Activated CD4-positive, alpha-beta T cell treated with anti-CD3 and anti-CD28 coated beads for 36 hours (primary cell): ENCODE measurements at regions of chr17 and their contacts with region 1.

Region 1: DNA sequence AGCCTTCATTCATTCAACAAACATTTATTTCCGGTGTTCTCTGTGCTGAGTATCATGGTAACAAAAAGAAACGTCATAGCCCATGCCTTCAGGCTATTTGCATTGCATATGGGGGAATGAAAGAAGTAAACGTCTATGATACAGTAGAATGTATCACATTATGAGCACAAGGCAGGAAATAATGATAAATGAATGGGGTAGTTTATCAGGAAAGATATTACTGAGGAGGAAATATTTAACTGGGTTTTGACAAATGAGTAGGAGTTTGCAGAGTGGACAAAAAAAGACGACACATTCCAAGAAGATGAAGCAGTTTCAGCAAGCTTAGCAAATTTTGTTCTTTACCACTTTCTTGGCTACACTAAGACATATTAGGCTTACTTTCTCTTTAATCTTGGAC is 1.3 kb upstream of the KRTAP4-7 start:
- DNase-seq: no peak
- ATAC-seq: no peak
- H3K4me3 Mint-ChIP-seq: no peak overlapping the region
- H3K27ac Mint-ChIP-seq: no peak overlapping the region
- H3K4me1 Mint-ChIP-seq: no peaks in the 10 kb centered on the region
- H3K27me3 Mint-ChIP-seq: peaks cover 7% of the 10 kb centered on the region

Region 2: GRCh38 chr17:40480501-40481003 is 602.1 kb before region 1 on chr17:
- CTCF ChIA-PET with region 1: no interaction called
- POLR2A ChIA-PET with region 1: no interaction called
- intact Hi-C with region 1: no loop called
- DNase-seq: peak; percentile 95
- ATAC-seq: peak; percentile 94
- H3K4me3 Mint-ChIP-seq: peak overlapping the region; percentile 60
- H3K27ac Mint-ChIP-seq: peak overlapping the region; percentile 96
- H3K4me1 Mint-ChIP-seq: peaks cover 70% of the 10 kb centered on the region
- H3K27me3 Mint-ChIP-seq: no peaks in the 10 kb centered on the region

Region 3: GRCh38 chr17:41107941-41108450 is 25.4 kb after region 1 on chr17:
- CTCF ChIA-PET with region 1: no interaction called
- POLR2A ChIA-PET with region 1: no interaction called
- intact Hi-C with region 1: loop called in 1 of 2 experiments (anchors 1 kb)
- DNase-seq: no peak
- ATAC-seq: no peak
- H3K4me3 Mint-ChIP-seq: no peak overlapping the region
- H3K27ac Mint-ChIP-seq: no peak overlapping the region
- H3K4me1 Mint-ChIP-seq: peaks cover 6% of the 10 kb centered on the region
- H3K27me3 Mint-ChIP-seq: peaks cover 6% of the 10 kb centered on the region

Region 4: GRCh38 chr17:41140360-41141132 is 57.9 kb after region 1 on chr17 and contains the start of gene KRTAP4-6:
- CTCF ChIA-PET with region 1: no interaction called
- POLR2A ChIA-PET with region 1: no interaction called
- intact Hi-C with region 1: loop called in 1 of 2 experiments (anchors 2 kb)
- DNase-seq: no peak
- ATAC-seq: no peak
- H3K4me3 Mint-ChIP-seq: no peak within 1 kb of the TSS
- H3K27ac Mint-ChIP-seq: no peak within 1 kb of the TSS
- H3K4me1 Mint-ChIP-seq: no peaks in the 10 kb centered on the region
- H3K27me3 Mint-ChIP-seq: peaks cover 2% of the 10 kb centered on the region
- total RNA-seq, gene KRTAP4-6: not detected